Activated T-helper 1 cell treated with anti-CD3 and anti-CD28 coated beads, Interleukin-12 subunit alpha, Interleukin-12 subunit beta, Interleukin-2, Interleukin-4 antibody, amounts not matched to agents 30 ng/mL and 10 ng/mL and 1 ng/mL, durations not matched to agents 14 hours and 24 hours and 36 hours (primary cell): ENCODE measurements at regions of chr6 and their contacts with region 1.

Region 1: DNA sequence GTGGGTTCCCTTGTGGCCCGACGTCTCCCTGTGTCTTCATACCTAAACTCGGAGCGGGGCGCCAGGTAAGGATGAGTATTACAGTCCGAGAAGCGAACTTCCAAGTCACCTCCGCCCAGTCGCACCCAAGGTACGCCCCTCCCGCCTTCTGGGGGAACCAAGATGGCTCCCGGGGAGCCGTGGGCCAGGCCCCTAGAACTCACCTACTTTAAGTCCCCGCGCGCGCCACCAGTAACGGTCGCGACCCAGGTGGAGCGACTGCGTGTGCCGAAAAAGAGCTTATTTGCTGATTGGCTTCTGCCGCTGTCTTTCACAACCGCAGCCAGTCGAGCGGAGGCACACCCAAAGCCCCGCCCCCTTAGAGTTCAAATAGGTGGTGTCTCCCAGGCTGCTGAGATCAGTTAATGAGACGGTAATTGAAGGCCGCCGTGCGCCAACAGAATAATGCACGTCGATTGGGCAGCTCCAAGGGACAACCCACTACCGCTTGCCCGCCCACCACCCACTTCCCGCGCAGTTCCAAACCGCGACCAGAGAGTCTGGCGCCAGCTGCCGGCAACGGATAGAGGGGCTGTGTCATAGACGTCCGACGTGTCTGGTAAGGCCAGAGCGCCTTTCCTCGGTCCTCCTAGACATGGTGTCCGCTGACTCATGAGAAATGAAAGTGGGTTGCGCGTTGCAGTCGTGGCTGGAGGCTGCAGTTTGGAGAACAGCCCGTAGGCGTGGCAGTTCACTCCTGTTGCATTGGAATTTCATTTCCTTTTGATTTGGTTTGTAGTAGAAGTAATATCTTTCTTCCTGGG is at the start of gene MDC1:
- DNase-seq: peak; percentile 99
- H3K4me3 Mint-ChIP-seq: peak within 1 kb of the TSS; percentile 91
- H3K27ac Mint-ChIP-seq: peak within 1 kb of the TSS; percentile 99
- H3K4me1 Mint-ChIP-seq: peaks cover 51% of the 10 kb centered on the region
- H3K27me3 Mint-ChIP-seq: no peaks in the 10 kb centered on the region
- total RNA-seq, gene MDC1: 93.7 and 95.7 TPM in 2 replicates

Region 2: DNA sequence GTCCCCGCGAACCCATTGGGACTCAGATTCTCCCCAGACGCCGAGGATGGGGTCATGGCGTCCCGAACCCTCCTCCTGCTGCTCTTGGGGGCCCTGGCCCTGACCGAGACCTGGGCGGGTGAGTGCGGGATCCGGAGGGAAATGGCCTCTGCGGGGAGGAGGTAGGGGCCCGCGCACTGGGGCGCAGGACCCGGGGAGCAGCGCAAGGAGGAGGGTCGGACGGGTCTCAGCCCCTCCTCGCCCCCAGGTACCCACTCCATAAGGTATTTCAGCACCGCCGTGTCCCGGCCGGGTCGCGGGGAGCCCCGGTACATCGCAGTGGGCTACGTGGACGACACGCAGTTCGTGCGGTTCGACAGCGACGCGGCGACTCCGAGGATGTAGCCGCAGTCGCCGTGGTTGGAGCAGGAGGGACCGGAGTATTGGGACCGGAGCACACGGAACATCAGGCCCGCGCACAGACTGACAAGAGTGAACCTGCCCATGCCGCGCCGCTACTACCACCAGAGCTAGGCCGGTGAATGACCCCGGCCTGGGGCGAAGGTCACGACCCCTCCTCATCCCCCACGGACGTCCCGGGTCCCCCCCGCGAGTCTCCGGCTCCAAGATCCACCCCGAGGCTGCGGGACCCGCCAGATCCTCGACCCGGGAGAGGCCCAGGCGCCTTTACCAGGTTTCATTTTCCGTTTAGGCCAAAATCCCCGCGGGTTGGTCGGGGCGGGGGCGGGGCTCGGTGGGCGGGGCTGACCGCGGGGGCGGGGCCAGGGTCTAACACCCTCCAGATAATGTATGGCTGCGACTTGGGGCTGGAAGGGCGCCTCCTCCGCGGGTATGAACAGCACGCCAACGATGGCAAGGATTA is 790.6 kb before region 1 on chr6:
- intact Hi-C with region 1: loop called (anchors 10 kb)
- DNase-seq: peak; percentile 79
- H3K4me3 Mint-ChIP-seq: peak overlapping the region; percentile 92
- H3K27ac Mint-ChIP-seq: peak overlapping the region; percentile 98
- H3K4me1 Mint-ChIP-seq: peaks cover 51% of the 10 kb centered on the region
- H3K27me3 Mint-ChIP-seq: peaks cover 4% of the 10 kb centered on the region

Region 3: GRCh38 chr6:30571075-30571768 is 146.0 kb before region 1 on chr6 and contains the start of gene ABCF1:
- intact Hi-C with region 1: loop called (anchors 1 kb)
- DNase-seq: peak; percentile 100
- H3K4me3 Mint-ChIP-seq: peak within 1 kb of the TSS; percentile 98
- H3K27ac Mint-ChIP-seq: peak within 1 kb of the TSS; percentile 98
- H3K4me1 Mint-ChIP-seq: peaks cover 62% of the 10 kb centered on the region
- H3K27me3 Mint-ChIP-seq: no peaks in the 10 kb centered on the region
- total RNA-seq, gene ABCF1: 115 and 120 TPM in 2 replicates

Region 4: GRCh38 chr6:30672445-30673253 is 44.6 kb before region 1 on chr6 and contains the start of gene DHX16:
- intact Hi-C with region 1: loop called (anchors 2 kb)
- DNase-seq: peak; percentile 85
- H3K4me3 Mint-ChIP-seq: peak within 1 kb of the TSS; percentile 87
- H3K27ac Mint-ChIP-seq: peak within 1 kb of the TSS; percentile 76
- H3K4me1 Mint-ChIP-seq: peaks cover 28% of the 10 kb centered on the region
- H3K27me3 Mint-ChIP-seq: no peaks in the 10 kb centered on the region
- total RNA-seq, gene DHX16: 52.0 and 54.2 TPM in 2 replicates

Region 5: DNA sequence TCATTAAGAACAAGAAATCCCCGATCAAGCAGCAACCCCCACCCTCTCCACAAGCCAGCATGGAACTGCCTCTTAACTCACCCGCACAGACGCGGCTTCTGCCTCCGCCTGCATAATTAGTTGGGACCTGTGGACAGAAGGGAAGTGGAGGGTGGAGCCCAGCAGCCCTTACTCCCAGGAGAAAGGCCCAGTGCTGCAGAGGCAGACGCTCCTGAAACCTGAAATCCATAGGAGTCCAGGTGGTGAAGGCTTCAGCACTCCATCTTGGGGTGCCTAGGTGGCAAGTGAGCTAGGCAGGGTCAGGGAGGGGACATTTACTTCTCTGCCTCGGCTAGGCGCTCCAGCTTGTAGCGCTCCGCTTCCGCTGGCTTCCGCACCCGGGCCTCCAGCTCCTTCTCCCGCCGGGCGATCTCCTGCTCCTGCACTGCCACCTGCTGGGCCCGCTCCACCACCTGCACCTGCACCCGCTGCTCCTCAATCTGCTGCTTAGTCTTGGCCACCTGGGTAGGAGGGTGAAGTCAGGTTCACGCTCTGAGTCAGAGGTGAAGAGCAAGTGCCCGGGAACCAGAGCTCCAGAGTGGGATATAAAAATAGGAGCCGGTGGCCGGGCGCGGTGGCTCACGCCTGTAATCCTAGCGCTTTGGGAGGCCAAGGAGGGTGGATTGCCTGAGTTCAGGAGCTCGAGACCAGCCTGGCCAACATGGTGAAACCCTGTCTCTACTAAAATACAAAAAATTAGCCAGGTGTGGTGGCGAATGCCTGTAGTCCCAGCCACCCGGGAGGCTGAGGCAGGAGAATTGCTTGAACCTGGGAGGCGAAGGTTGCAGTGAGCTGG is 13.6 kb after region 1 on chr6:
- intact Hi-C with region 1: loop called (anchors 1 kb)
- DNase-seq: peak; percentile 79
- H3K4me3 Mint-ChIP-seq: peak overlapping the region; percentile 19
- H3K27ac Mint-ChIP-seq: peak overlapping the region; percentile 55
- H3K4me1 Mint-ChIP-seq: peaks cover 51% of the 10 kb centered on the region
- H3K27me3 Mint-ChIP-seq: no peaks in the 10 kb centered on the region

Region 6: DNA sequence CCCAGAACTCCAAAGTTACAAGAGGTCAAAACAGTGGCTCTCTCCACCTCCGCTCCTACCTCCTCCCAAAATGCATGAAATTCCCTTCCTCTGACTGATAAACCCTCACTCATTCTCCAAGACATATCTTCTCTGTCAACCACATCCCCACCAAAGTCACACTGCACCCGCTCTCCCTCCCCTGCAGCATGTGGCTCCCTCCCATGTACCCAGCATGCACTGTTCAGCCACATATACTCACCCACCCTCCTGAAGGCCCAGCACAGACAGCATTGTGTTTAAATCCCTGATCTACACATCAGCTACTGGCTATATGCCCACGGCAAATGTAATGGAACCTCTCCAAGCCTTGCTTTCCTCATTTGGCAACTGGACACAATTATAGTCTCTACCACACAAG is 458.7 kb after region 1 on chr6:
- intact Hi-C with region 1: no loop called
- DNase-seq: no peak
- H3K4me3 Mint-ChIP-seq: no peak overlapping the region
- H3K27ac Mint-ChIP-seq: no peak overlapping the region
- H3K4me1 Mint-ChIP-seq: peaks cover 13% of the 10 kb centered on the region
- H3K27me3 Mint-ChIP-seq: no peaks in the 10 kb centered on the region

Region 7: GRCh38 chr6:31652925-31653718 is 935.9 kb after region 1 on chr6:
- intact Hi-C with region 1: loop called (anchors 1 kb)
- DNase-seq: peak; percentile 81
- H3K4me3 Mint-ChIP-seq: peak overlapping the region; percentile 93
- H3K27ac Mint-ChIP-seq: peak overlapping the region; percentile 100
- H3K4me1 Mint-ChIP-seq: peaks cover 48% of the 10 kb centered on the region
- H3K27me3 Mint-ChIP-seq: no peaks in the 10 kb centered on the region